ENCODE measurements at regions of chr13 and their contacts with region 1.

Region 1: DNA sequence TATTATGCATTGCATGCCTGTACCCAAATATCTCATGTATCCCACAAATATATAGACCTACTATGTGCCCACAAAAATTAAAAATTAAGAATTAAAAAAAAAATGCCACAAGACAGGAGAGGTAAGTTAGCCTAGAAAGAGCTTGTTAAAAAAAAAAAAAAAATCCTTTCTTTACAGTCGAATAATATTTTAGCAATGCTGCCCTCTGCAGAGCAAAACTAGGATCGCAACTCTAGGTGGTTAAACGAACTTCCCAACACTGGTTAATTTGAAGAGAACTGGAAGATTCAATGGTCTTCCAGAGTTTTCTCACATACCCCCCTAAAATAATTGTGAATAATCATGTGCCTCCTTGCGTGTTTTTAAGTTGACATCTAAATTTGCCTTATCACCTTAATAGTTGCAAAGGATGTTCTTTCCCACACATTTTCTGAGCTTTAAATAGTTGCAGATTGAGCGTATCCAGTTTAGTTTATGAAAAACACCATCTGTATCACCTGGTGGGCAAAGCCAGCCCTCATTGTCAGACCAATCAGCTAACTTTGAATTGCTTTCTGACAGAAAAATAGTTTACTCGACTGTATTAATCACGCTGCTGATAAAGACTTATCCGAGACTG is 47.4 kb upstream of the RCBTB2 start:
- DNase-seq: peak; percentile 76 to 79
- H3K4me3 ChIP-seq: no peak overlapping the region
- H3K27ac ChIP-seq: no peak overlapping the region
- H3K4me1 ChIP-seq: peaks cover 2 to 25% of the 10 kb centered on the region in 2 donors
- H3K27me3 ChIP-seq: no peaks in the 10 kb centered on the region
- CTCF ChIP-seq: peak; percentile 26 to 90 (median 74)
- POLR2A ChIP-seq: no peak

Region 2: GRCh38 chr13:48126944-48127830 is 453.1 kb before region 1 on chr13:
- intact Hi-C with region 1: loop called (anchors 10 kb)
- DNase-seq: peak; percentile 19 to 23
- H3K4me3 ChIP-seq: no peak overlapping the region
- H3K27ac ChIP-seq: peak overlapping the region; percentile 14 to 80 (median 53)
- H3K4me1 ChIP-seq: peaks cover 22 to 40% of the 10 kb centered on the region in 2 donors
- H3K27me3 ChIP-seq: no peaks in the 10 kb centered on the region
- CTCF ChIP-seq: peak; percentile 35 to 76 (median 60)
- POLR2A ChIP-seq: no peak

Region 3: DNA sequence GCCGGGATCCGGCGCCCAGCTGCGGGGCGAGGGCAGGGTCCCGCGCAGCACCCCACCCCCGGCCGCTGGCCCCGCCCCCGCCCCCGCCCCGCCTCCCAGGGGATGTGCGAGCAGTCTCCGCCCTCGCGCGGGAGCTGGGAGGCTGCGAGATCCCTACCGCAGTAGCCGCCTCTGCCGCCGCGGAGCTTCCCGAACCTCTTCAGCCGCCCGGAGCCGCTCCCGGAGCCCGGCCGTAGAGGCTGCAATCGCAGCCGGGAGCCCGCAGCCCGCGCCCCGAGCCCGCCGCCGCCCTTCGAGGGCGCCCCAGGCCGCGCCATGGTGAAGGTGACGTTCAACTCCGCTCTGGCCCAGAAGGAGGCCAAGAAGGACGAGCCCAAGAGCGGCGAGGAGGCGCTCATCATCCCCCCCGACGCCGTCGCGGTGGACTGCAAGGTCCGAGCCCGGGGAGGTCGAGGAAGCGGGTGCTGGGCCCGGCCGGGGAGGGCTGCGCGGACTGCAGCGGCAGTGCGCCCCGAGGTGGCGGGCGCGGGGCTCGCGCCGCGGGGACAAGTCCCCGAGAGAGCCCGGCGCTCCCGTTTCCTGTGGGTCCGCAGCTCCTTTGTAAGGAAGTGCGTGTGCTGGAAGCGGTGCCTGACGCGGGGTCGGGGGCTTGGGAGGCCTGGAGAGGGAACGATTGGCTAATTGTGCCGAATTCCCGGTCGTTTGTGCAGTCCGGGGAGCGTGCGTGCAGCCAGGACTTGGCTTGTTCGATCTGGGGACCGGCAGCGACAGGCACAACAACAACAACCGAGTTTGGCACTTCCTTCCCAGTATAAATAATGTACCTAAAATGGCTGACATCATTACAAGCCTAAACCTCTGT is 347.0 kb before region 1 on chr13 and contains the start of gene ITM2B:
- intact Hi-C with region 1: loop called (anchors 10 kb)
- DNase-seq: peak; percentile 78 to 81
- H3K4me3 ChIP-seq: peak within 1 kb of the TSS; percentile 45 to 99 (median 98)
- H3K27ac ChIP-seq: peak within 1 kb of the TSS; percentile 99 to 100 (median 100)
- H3K4me1 ChIP-seq: peaks cover 15 to 28% of the 10 kb centered on the region in 2 donors
- H3K27me3 ChIP-seq: no peaks in the 10 kb centered on the region
- CTCF ChIP-seq: peak in 2 of 6 experiments; percentile 9 to 42
- POLR2A ChIP-seq: peak; percentile 91 to 94
- total RNA-seq, gene ITM2B: 550 to 716 (median 624) TPM

Region 4: GRCh38 chr13:48334534-48335127 is 245.7 kb before region 1 on chr13:
- intact Hi-C with region 1: loop called (anchors 5 kb)
- DNase-seq: no peak
- H3K4me3 ChIP-seq: no peak overlapping the region
- H3K27ac ChIP-seq: peak overlapping the region; percentile 7 to 41 (median 19)
- H3K4me1 ChIP-seq: peaks cover 9 to 11% of the 10 kb centered on the region in 2 donors
- H3K27me3 ChIP-seq: no peaks in the 10 kb centered on the region
- CTCF ChIP-seq: peak; percentile 5 to 87 (median 46)
- POLR2A ChIP-seq: no peak

Region 5: DNA sequence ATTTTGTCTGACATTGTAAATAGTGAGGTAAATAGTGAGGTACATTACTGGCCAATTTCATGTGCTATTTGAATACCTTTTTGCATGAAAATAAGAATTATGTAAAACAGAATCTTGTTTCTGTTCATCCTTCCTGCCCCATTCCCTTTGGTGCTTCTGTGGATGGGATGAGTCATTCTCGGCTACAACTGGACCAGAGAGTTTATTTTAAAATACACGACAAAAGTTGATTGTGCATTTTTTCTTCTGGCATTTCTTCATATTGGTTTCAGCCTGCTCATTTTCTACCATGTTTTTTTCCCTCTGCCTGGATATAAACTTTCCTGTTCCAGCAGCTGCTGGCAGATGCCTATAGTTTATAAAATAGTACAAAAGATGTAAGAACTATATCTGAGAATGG is 181.0 kb after region 1 on chr13:
- intact Hi-C with region 1: no loop called
- DNase-seq: no peak
- H3K4me3 ChIP-seq: no peak overlapping the region
- H3K27ac ChIP-seq: no peak overlapping the region
- H3K4me1 ChIP-seq: no peaks in the 10 kb centered on the region
- H3K27me3 ChIP-seq: no peaks in the 10 kb centered on the region
- CTCF ChIP-seq: no peak
- POLR2A ChIP-seq: no peak

Region 6: GRCh38 chr13:48849515-48849914 is 269.2 kb after region 1 on chr13:
- intact Hi-C with region 1: no loop called
- DNase-seq: no peak
- H3K4me3 ChIP-seq: no peak overlapping the region
- H3K27ac ChIP-seq: no peak overlapping the region
- H3K4me1 ChIP-seq: no peaks in the 10 kb centered on the region
- H3K27me3 ChIP-seq: no peaks in the 10 kb centered on the region
- CTCF ChIP-seq: no peak
- POLR2A ChIP-seq: no peak